WTC11 (cell line): ENCODE measurements at regions of chr5 and their contacts with region 1.

Region 1: GRCh38 chr5:141412854-141413539 is at the start of gene PCDHGA10:
- DNase-seq: peak; percentile 78
- ATAC-seq: peak; percentile 43
- H3K4me3 Mint-ChIP-seq: peak within 1 kb of the TSS; percentile 94
- H3K27ac Mint-ChIP-seq: peak within 1 kb of the TSS; percentile 51
- H3K4me1 Mint-ChIP-seq: peaks cover 27% of the 10 kb centered on the region
- H3K27me3 Mint-ChIP-seq: peaks cover 28% of the 10 kb centered on the region
- CTCF ChIP-seq: peak; percentile 71
- total RNA-seq, gene PCDHGA10: 10.7 to 11.9 TPM (median 11.0 TPM) in 3 replicates

Region 2: GRCh38 chr5:141303756-141304155 is 109.2 kb before region 1 on chr5 and contains the start of gene SLC25A2:
- CTCF ChIA-PET with region 1: no interaction called
- POLR2A ChIA-PET with region 1: no interaction called
- DNase-seq: no peak
- ATAC-seq: no peak
- H3K4me3 Mint-ChIP-seq: no peak within 1 kb of the TSS
- H3K27ac Mint-ChIP-seq: no peak within 1 kb of the TSS
- H3K4me1 Mint-ChIP-seq: no peaks in the 10 kb centered on the region
- H3K27me3 Mint-ChIP-seq: no peaks in the 10 kb centered on the region
- CTCF ChIP-seq: no peak
- total RNA-seq, gene SLC25A2: 0.24 TPM in 1 of 3 replicates, not detected in the others

Region 3: GRCh38 chr5:141320225-141321169 is 92.5 kb before region 1 on chr5 and contains the start of gene TAF7:
- CTCF ChIA-PET with region 1: interaction called, 14 read pairs
- POLR2A ChIA-PET with region 1: no interaction called
- DNase-seq: peak; percentile 95
- ATAC-seq: peak; percentile 94
- H3K4me3 Mint-ChIP-seq: peak within 1 kb of the TSS; percentile 99
- H3K27ac Mint-ChIP-seq: peak within 1 kb of the TSS; percentile 99
- H3K4me1 Mint-ChIP-seq: peaks cover 24% of the 10 kb centered on the region
- H3K27me3 Mint-ChIP-seq: peaks cover 24% of the 10 kb centered on the region
- CTCF ChIP-seq: peak; percentile 85
- total RNA-seq, gene TAF7: 87.8 to 96.2 TPM (median 90.1 TPM) in 3 replicates

Region 4: DNA sequence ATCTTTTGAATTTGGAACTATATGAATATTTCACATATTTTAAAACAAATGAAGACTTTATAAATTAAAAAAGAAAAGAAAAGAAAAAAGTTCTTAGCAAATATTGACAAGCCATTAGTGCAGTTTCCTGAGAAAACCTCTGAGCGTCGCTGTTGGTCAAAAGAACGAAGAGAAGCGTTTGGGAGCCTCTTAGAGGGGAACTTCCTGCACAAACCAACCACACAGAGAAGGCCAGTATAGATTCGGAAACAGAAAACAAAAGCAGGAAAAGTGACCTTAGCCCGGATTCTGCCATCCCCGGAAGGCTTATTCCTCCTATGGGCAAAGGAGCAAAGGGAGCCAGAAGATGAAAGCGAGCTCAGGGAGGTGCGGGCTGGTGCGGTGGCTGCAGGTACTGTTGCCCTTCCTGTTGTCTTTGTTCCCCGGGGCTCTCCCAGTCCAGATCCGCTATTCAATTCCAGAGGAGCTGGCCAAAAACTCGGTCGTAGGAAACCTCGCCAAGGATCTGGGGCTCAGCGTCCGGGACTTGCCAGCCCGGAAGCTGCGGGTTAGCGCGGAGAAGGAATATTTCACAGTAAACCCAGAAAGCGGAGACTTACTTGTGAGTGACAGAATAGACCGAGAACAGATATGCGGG is 53.1 kb before region 1 on chr5 and contains the start of gene PCDHGB2:
- CTCF ChIA-PET with region 1: interaction called, 14 read pairs
- POLR2A ChIA-PET with region 1: no interaction called
- DNase-seq: peak; percentile 46
- ATAC-seq: peak; percentile 83
- H3K4me3 Mint-ChIP-seq: peak within 1 kb of the TSS; percentile 60
- H3K27ac Mint-ChIP-seq: peak within 1 kb of the TSS; percentile 96
- H3K4me1 Mint-ChIP-seq: peaks cover 27% of the 10 kb centered on the region
- H3K27me3 Mint-ChIP-seq: peaks cover 22% of the 10 kb centered on the region; the same call in 1 of the 2 replicates
- CTCF ChIP-seq: peak; percentile 65
- total RNA-seq, gene PCDHGB2: 4.1 to 5.5 TPM (median 5.2 TPM) in 3 replicates

Region 5: GRCh38 chr5:141402553-141403260 is 10.3 kb before region 1 on chr5 and contains the start of gene PCDHGA9:
- CTCF ChIA-PET with region 1: interaction called, 38 read pairs
- POLR2A ChIA-PET with region 1: interaction called, 6 read pairs
- DNase-seq: no peak
- ATAC-seq: no peak
- H3K4me3 Mint-ChIP-seq: no peak within 1 kb of the TSS
- H3K27ac Mint-ChIP-seq: no peak within 1 kb of the TSS
- H3K4me1 Mint-ChIP-seq: no peaks in the 10 kb centered on the region
- H3K27me3 Mint-ChIP-seq: peaks cover 14% of the 10 kb centered on the region
- CTCF ChIP-seq: no peak
- total RNA-seq, gene PCDHGA9: 1.9 to 2.9 TPM (median 2.3 TPM) in 3 replicates

Region 6: DNA sequence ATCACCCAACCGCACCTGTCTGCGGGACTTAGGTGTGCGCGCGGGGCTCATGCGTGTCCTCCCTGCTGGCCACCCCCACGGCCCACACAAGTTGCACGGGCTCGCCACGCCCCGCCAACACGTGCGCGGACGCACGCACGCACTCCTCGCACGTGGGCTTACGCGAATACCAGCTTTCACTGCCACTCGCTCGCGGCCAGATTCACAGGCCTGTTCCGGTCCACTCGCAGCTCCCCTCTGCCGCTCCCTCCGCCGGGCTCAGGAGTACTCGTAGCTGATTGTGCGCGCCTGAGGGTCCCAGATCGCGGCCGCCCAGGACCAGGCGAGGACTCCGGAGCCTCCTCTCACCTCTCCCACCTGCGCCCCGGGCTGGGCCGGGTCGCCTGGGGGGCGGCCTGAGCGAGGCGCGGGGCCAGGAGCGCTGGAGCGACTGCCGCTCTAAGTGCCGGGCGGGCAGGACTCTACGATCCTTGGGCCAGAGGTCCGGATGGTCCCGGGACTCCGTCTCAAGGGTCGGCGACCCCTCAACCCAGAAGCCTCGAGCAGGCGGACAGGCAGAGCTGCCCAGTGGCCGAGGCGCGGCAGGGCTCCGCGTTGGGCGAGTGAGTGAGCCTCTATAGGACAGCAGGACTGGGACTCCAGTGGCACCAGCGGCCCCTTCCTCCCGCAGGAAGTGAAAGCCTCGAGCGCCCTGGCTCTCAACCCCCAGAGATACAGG is 79.3 kb after region 1 on chr5:
- CTCF ChIA-PET with region 1: interaction called, 47 read pairs
- POLR2A ChIA-PET with region 1: interaction called, 4 read pairs
- DNase-seq: peak; percentile 49
- ATAC-seq: peak; percentile 10
- H3K4me3 Mint-ChIP-seq: peak overlapping the region; percentile 66
- H3K27ac Mint-ChIP-seq: no peak overlapping the region
- H3K4me1 Mint-ChIP-seq: peaks cover 57% of the 10 kb centered on the region
- H3K27me3 Mint-ChIP-seq: peaks cover 52% of the 10 kb centered on the region
- CTCF ChIP-seq: no peak

Region 7: GRCh38 chr5:141564216-141564692 is 151.3 kb after region 1 on chr5:
- CTCF ChIA-PET with region 1: interaction called, 60 read pairs
- POLR2A ChIA-PET with region 1: interaction called, 3 read pairs
- DNase-seq: peak; percentile 48
- ATAC-seq: peak; percentile 56
- H3K4me3 Mint-ChIP-seq: no peak overlapping the region
- H3K27ac Mint-ChIP-seq: peak overlapping the region; percentile 94
- H3K4me1 Mint-ChIP-seq: peaks cover 35% of the 10 kb centered on the region
- H3K27me3 Mint-ChIP-seq: no peaks in the 10 kb centered on the region
- CTCF ChIP-seq: peak; percentile 94

Region 8: DNA sequence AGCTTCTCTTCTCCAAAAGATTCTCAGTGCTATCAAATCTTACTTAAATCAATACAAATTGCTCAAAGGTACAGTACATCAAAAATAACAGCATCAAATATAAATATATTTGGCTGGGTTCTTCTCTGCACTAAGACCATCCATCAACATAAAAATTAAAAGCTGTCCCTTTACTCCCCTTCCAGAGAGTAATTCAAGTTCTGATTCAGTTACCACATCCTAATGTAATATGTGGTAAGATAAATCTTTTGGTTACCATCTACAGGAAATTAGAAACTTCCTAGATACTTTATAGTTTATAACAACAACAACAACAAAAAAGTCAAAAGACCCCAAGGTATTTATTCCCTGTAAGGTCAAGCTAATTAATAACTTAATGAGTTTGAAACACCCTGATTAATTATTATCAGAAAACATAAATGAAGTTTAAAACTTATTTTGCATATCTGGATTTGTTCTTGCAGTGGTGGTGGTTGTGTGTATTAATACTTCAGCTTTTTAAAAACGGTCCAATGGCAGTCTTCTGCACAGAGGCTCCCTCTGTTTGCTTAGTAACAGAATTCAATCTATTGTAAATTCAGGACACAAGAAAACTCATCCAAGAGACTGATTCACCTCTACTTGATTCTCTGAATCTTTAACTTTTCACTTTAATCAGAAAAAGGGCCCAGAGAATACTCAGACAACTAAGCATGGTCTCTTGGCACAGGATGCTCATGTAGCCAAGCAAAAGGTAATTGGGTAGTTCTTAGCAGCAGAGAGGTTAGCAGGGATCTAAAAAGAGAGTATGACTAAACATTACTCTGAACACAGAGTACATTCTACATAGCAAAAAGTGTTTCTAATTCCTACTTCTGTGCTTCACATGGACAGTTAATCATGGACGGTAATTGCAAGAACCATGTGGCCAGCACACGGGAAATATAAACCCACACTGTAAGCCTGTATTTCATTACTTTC is 185.7 kb after region 1 on chr5:
- CTCF ChIA-PET with region 1: no interaction called
- POLR2A ChIA-PET with region 1: no interaction called
- DNase-seq: no peak
- ATAC-seq: no peak
- H3K4me3 Mint-ChIP-seq: no peak overlapping the region
- H3K27ac Mint-ChIP-seq: no peak overlapping the region
- H3K4me1 Mint-ChIP-seq: no peaks in the 10 kb centered on the region
- H3K27me3 Mint-ChIP-seq: no peaks in the 10 kb centered on the region
- CTCF ChIP-seq: no peak